Left cardiac atrium (tissue), 4 donors: ENCODE measurements at regions of chr1 and their contacts with region 1.

Region 1: DNA sequence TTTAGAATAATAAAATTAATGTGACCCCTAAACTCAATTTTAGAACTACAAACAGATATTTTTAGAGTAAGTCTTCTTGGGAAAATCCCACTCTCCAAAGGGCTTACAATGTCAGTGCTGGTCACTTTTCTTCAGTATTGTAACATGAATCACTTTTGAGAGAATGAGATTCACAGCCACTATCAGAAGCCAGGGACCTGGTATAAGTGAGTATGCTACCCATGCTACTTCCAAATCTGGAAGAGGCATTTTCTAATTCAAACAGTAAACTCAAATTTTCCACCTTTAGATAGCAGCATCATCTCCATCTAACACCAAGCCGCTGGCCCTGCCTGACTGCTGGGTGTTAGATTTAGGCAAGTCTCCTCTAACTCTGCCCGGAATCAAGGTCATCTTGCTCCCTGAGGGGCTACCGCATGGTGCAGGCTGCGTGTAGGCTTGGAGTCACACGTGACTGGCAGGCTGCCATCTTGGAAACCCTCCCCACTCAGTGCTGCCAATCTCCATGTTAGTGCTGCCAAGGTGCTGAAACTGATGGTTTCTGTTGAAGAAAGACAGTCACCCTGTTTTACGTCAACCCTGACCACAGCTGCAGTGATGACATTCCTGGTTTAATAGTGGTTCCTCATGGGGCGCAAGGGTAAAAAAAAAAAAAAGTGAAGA is 882.9 kb upstream of the B3GALT2 start:
- DNase-seq: peak; percentile 70
- ATAC-seq: peak; percentile 92 to 94

Region 2: DNA sequence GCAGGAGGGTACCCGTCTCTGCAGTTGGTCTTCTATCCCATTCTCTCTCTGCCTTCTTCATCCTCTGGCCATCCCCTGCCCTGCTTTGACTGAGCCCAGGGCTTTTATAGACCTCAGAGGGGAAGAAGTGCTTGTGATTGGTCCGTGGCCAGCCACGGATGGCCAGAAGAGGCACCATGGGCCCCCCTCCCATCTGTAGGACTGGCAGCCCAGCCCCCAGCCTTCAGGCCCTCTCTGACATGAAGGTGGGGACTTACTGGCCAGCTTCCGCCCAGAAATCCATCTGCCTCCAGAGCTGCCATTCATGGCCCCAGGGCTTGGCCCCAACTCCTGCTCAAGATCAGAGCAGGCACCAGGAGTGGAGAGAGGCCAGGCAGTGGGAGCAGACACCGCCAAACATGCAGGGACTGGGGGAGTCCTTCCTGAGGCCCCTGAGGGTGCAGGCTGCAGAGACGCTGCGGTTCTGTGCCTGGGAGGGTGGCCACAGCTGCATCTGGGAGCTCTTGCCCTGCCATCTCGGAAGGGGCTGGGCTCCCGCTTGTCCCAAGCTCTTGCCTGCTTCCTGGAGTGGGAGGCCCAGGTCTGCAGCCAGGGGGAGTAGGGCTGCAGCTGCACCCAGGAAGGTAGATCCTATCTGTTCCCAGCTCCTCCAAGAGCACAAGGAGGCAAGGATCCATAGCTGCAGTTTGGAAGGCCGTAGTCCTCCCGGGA is 184.3 kb before region 1 on chr1:
- intact Hi-C with region 1: loop called in 1 of 2 experiments (anchors 10 kb)
- DNase-seq: no peak
- ATAC-seq: no peak

Region 3: GRCh38 chr1:193971595-193971994 is 97.7 kb before region 1 on chr1:
- intact Hi-C with region 1: loop called in 1 of 2 experiments (anchors 5 kb)
- DNase-seq: no peak
- ATAC-seq: peak in 1 of 2 donors; percentile 87